ENCODE measurements at regions of chr3 and their contacts with region 1.

Region 1: GRCh38 chr3:113150250-113150649 is 61.1 kb upstream of the BOC start:
- DNase-seq: no peak
- H3K4me3 ChIP-seq: no peak overlapping the region
- H3K4me3 Mint-ChIP-seq: no peak overlapping the region
- H3K27ac Mint-ChIP-seq: no peak overlapping the region
- H3K4me1 ChIP-seq: no peaks in the 10 kb centered on the region
- H3K4me1 Mint-ChIP-seq: no peaks in the 10 kb centered on the region
- H3K27me3 ChIP-seq: no peaks in the 10 kb centered on the region; the same call in 1 of the 2 replicates
- H3K27me3 Mint-ChIP-seq: no peaks in the 10 kb centered on the region
- CTCF ChIP-seq: no peak

Region 2: GRCh38 chr3:112925969-112926368 is 224.3 kb before region 1 on chr3:
- CTCF ChIA-PET with region 1: no interaction called
- POLR2A ChIA-PET with region 1: no interaction called
- intact Hi-C with region 1: no loop called
- DNase-seq: no peak
- H3K4me3 ChIP-seq: no peak overlapping the region
- H3K4me3 Mint-ChIP-seq: no peak overlapping the region
- H3K27ac Mint-ChIP-seq: no peak overlapping the region
- H3K4me1 ChIP-seq: no peaks in the 10 kb centered on the region
- H3K4me1 Mint-ChIP-seq: no peaks in the 10 kb centered on the region
- H3K27me3 ChIP-seq: no peaks in the 10 kb centered on the region
- H3K27me3 Mint-ChIP-seq: no peaks in the 10 kb centered on the region
- CTCF ChIP-seq: no peak

Region 3: DNA sequence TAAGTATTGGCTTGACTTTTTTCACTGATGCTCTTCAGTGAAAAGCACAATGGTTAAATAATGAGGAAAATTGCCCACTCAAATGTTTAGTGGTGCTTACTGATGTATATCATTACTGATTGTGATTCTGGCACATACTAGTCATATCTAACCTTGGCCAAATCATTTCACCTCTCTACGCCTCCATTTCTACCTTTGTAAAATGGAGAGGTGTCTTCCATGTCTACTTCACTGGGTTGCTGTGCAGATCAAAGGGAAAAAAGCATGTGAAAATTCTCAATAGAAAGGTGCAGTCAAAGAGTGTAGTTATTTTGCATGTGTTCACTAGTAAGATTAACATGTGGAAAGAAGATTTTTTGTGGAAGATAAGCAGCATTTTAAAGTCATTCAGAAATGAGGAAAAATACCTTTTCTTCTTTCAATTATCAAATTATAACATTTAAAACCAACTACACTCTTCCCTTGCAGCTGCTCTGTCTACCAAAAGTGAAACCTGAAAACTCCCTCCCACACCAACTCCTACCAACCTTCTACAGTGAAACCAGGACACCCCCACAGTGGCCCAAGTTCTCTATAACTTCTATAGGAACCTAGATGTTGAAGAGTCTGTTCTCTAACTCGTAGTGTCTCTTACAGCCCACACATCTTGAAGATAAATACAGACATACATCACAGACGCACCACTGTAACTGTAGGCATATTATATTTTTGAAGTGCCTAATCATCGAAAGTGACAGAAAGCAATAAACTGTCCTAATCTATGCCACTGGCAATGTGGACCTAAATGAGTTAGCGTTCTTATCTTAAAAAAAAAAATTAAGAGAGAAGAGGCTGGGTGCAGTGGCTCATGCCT is 176.7 kb before region 1 on chr3:
- CTCF ChIA-PET with region 1: no interaction called
- POLR2A ChIA-PET with region 1: no interaction called
- intact Hi-C with region 1: no loop called
- DNase-seq: no peak
- H3K4me3 ChIP-seq: no peak overlapping the region
- H3K4me3 Mint-ChIP-seq: no peak overlapping the region
- H3K27ac Mint-ChIP-seq: no peak overlapping the region
- H3K4me1 ChIP-seq: no peaks in the 10 kb centered on the region
- H3K4me1 Mint-ChIP-seq: no peaks in the 10 kb centered on the region
- H3K27me3 ChIP-seq: no peaks in the 10 kb centered on the region
- H3K27me3 Mint-ChIP-seq: peaks cover 3% of the 10 kb centered on the region
- CTCF ChIP-seq: no peak

Region 4: GRCh38 chr3:113002679-113003078 is 147.6 kb before region 1 on chr3:
- CTCF ChIA-PET with region 1: no interaction called
- POLR2A ChIA-PET with region 1: no interaction called
- intact Hi-C with region 1: no loop called
- DNase-seq: no peak
- H3K4me3 ChIP-seq: no peak overlapping the region
- H3K4me3 Mint-ChIP-seq: no peak overlapping the region
- H3K27ac Mint-ChIP-seq: no peak overlapping the region
- H3K4me1 ChIP-seq: no peaks in the 10 kb centered on the region
- H3K4me1 Mint-ChIP-seq: no peaks in the 10 kb centered on the region
- H3K27me3 ChIP-seq: no peaks in the 10 kb centered on the region
- H3K27me3 Mint-ChIP-seq: no peaks in the 10 kb centered on the region
- CTCF ChIP-seq: no peak

Region 5: GRCh38 chr3:113165841-113166240 is 15.6 kb after region 1 on chr3:
- CTCF ChIA-PET with region 1: no interaction called
- POLR2A ChIA-PET with region 1: no interaction called
- intact Hi-C with region 1: loop called (anchors 1 kb)
- DNase-seq: no peak
- H3K4me3 ChIP-seq: no peak overlapping the region
- H3K4me3 Mint-ChIP-seq: no peak overlapping the region
- H3K27ac Mint-ChIP-seq: no peak overlapping the region
- H3K4me1 ChIP-seq: no peaks in the 10 kb centered on the region
- H3K4me1 Mint-ChIP-seq: no peaks in the 10 kb centered on the region
- H3K27me3 ChIP-seq: no peaks in the 10 kb centered on the region
- H3K27me3 Mint-ChIP-seq: peaks cover 10% of the 10 kb centered on the region
- CTCF ChIP-seq: no peak